Mammary epithelial cell (primary cell): ENCODE measurements at regions of chr10 and their contacts with region 1.

Region 1: DNA sequence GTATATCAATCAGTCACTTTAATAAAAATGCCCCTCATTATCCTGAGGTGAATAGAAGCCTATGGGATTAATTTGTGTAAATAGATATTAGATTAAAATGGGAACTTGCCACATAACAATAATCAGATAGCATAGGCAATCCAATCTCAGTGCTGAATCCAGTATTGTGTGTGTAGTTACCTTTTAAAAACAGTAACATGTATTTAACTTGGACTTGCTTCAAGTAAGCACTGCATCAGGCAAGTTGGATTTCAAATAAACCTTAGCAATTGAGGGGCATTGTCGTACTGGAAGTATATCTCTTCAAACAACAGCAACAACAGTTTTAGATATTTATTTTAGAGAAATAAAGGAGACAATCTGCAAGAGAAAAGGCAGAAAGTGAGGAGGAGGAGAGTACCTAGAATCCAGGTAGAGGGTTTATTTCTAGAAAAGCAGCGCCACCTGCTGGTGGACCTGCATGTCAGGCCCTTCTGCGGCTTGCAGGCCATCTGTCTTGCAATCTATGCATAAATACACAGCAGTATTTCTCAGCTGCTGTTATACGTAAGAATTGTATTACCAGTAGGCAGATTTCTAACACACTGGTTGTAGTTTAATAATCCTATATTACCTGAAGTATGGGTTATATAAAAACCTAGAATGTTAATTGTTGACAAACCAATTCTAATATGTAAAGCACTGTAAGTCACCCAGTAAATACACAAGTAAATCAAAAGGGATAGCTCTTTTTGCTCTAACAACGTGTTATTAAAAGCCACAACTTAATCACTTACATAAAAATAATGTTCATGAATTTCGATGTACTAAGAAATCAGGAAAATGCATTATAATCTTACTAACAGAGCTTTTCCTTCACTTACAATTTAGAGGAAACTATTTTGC is 652.8 kb downstream of the KCNMA1 start:
- DNase-seq: peak; percentile 45
- H3K4me3 ChIP-seq: no peak overlapping the region
- H3K27ac ChIP-seq: no peak overlapping the region
- H3K4me1 ChIP-seq: no peaks in the 10 kb centered on the region
- H3K27me3 ChIP-seq: no peaks in the 10 kb centered on the region
- CTCF ChIP-seq: peak; percentile 90 to 91

Region 2: GRCh38 chr10:76311752-76312636 is 672.8 kb before region 1 on chr10:
- CTCF ChIA-PET with region 1: no interaction called
- dilution Hi-C with region 1: no loop called
- in situ Hi-C with region 1: loop called in 1 of 2 experiments (anchors 25 kb)
- intact Hi-C with region 1: loop called (anchors 2 kb)
- DNase-seq: peak; percentile 16
- H3K4me3 ChIP-seq: no peak overlapping the region
- H3K27ac ChIP-seq: no peak overlapping the region
- H3K4me1 ChIP-seq: no peaks in the 10 kb centered on the region
- H3K27me3 ChIP-seq: no peaks in the 10 kb centered on the region
- CTCF ChIP-seq: peak; percentile 66 to 69

Region 3: GRCh38 chr10:76558586-76558985 is 426.2 kb before region 1 on chr10:
- CTCF ChIA-PET with region 1: no interaction called
- dilution Hi-C with region 1: no loop called
- in situ Hi-C with region 1: loop called in 1 of 2 experiments (anchors 25 kb)
- intact Hi-C with region 1: no loop called
- DNase-seq: peak; percentile 45
- H3K4me3 ChIP-seq: no peak overlapping the region
- H3K27ac ChIP-seq: no peak overlapping the region
- H3K4me1 ChIP-seq: no peaks in the 10 kb centered on the region
- H3K27me3 ChIP-seq: no peaks in the 10 kb centered on the region
- CTCF ChIP-seq: no peak

Region 4: GRCh38 chr10:76632777-76633071 is 352.1 kb before region 1 on chr10:
- CTCF ChIA-PET with region 1: interaction called, 4 read pairs
- dilution Hi-C with region 1: no loop called
- in situ Hi-C with region 1: no loop called
- intact Hi-C with region 1: loop called (anchors 1 kb)
- DNase-seq: peak; percentile 35
- H3K4me3 ChIP-seq: no peak overlapping the region
- H3K27ac ChIP-seq: no peak overlapping the region
- H3K4me1 ChIP-seq: no peaks in the 10 kb centered on the region
- H3K27me3 ChIP-seq: no peaks in the 10 kb centered on the region
- CTCF ChIP-seq: peak; percentile 66 to 75

Region 5: GRCh38 chr10:77111611-77112550 is 127.1 kb after region 1 on chr10:
- CTCF ChIA-PET with region 1: no interaction called
- dilution Hi-C with region 1: no loop called
- in situ Hi-C with region 1: no loop called
- intact Hi-C with region 1: loop called (anchors 1 kb)
- DNase-seq: peak; percentile 66
- H3K4me3 ChIP-seq: no peak overlapping the region
- H3K27ac ChIP-seq: no peak overlapping the region
- H3K4me1 ChIP-seq: peaks cover 9% of the 10 kb centered on the region
- H3K27me3 ChIP-seq: no peaks in the 10 kb centered on the region
- CTCF ChIP-seq: peak; percentile 76 to 77